Panc1 (cell line): ENCODE measurements at regions of chr19 and their contacts with region 1.

Region 1: GRCh38 chr19:1929021-1929742 is 11.8 kb upstream of the CSNK1G2 start:
- DNase-seq: no peak
- ATAC-seq: peak; percentile 89
- H3K4me3 ChIP-seq: peak overlapping the region; percentile 35 to 55
- H3K27ac ChIP-seq: 0 out of 2 replicates have a peak overlapping the region, but pooled peaks have one; percentile 23
- H3K4me1 ChIP-seq: no peaks in the 10 kb centered on the region; the same call in 1 of the 2 replicates
- H3K27me3 ChIP-seq: no peaks in the 10 kb centered on the region
- CTCF ChIP-seq: peak; percentile 87

Region 2: GRCh38 chr19:1811472-1812218 is 117.5 kb before region 1 on chr19:
- CTCF ChIA-PET with region 1: no interaction called
- POLR2A ChIA-PET with region 1: no interaction called
- in situ Hi-C with region 1: no loop called
- intact Hi-C with region 1: no loop called
- DNase-seq: no peak
- ATAC-seq: peak; percentile 62
- H3K4me3 ChIP-seq: peak overlapping the region; percentile 57 to 70
- H3K27ac ChIP-seq: peak overlapping the region; percentile 88
- H3K4me1 ChIP-seq: peaks cover 16% of the 10 kb centered on the region; the same call in 1 of the 2 replicates
- H3K27me3 ChIP-seq: no peaks in the 10 kb centered on the region
- CTCF ChIP-seq: no peak

Region 3: GRCh38 chr19:2010135-2010668 is 81.0 kb after region 1 on chr19:
- CTCF ChIA-PET with region 1: interaction called, 12 read pairs
- POLR2A ChIA-PET with region 1: no interaction called
- in situ Hi-C with region 1: no loop called
- intact Hi-C with region 1: no loop called
- DNase-seq: no peak
- ATAC-seq: no peak
- H3K4me3 ChIP-seq: no peak overlapping the region
- H3K27ac ChIP-seq: no peak overlapping the region
- H3K4me1 ChIP-seq: no peaks in the 10 kb centered on the region
- H3K27me3 ChIP-seq: no peaks in the 10 kb centered on the region
- CTCF ChIP-seq: no peak

Region 4: DNA sequence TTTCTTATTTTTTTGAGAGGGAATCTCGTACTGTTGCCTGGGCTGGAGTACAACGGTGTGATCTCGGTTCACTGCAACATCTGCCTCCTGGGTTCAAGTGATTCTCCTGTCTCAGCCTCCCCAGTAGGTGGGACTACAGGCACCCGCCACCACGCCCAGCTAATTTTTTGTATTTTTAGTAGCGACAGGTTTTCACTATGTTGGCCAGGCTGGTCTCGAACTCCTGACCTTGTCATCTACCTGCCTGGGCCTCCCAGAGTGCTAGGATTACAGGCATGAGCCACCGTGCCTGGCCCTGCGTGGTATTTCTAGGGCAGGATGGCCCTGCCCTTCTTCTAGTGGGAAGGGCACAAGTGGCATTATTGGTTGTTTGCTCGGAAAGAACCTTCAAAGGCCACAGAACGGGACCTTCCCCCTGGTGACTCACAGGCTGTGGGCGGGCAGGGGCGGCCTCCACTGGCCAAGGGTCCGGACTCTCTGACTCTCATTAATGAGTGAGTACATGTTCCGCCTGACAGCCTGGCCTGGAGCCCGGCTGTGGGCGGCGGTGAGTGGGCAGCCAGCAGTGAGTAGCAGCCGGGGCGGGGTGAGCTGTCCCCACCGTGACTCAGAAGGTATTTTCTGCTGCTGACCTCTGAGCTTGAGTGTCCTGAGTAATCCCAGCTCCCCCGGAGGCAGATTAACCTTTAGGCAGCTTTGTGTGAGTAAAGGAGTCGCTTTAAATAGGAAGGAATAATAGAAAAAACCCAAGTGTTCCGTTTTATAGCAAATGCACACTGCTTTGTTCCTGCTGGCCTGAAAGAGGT is 239.6 kb after region 1 on chr19:
- CTCF ChIA-PET with region 1: no interaction called
- POLR2A ChIA-PET with region 1: no interaction called
- in situ Hi-C with region 1: no loop called
- intact Hi-C with region 1: no loop called
- DNase-seq: peak; percentile 94
- ATAC-seq: peak; percentile 89
- H3K4me3 ChIP-seq: peak overlapping the region; percentile 9 to 35
- H3K27ac ChIP-seq: peak overlapping the region; percentile 88
- H3K4me1 ChIP-seq: peaks cover 46% of the 10 kb centered on the region
- H3K27me3 ChIP-seq: no peaks in the 10 kb centered on the region
- CTCF ChIP-seq: no peak